ENCODE measurements at regions of chr19 and their contacts with region 1.

Region 1: GRCh38 chr19:49097455-49098288 is 12.4 kb downstream of the SNRNP70 start:
- DNase-seq: peak; percentile 87
- H3K4me3 Mint-ChIP-seq: no peak overlapping the region
- H3K27ac Mint-ChIP-seq: no peak overlapping the region
- H3K4me1 Mint-ChIP-seq: peaks cover 5% of the 10 kb centered on the region
- H3K27me3 Mint-ChIP-seq: no peaks in the 10 kb centered on the region
- CTCF ChIP-seq: peak; percentile 96

Region 2: DNA sequence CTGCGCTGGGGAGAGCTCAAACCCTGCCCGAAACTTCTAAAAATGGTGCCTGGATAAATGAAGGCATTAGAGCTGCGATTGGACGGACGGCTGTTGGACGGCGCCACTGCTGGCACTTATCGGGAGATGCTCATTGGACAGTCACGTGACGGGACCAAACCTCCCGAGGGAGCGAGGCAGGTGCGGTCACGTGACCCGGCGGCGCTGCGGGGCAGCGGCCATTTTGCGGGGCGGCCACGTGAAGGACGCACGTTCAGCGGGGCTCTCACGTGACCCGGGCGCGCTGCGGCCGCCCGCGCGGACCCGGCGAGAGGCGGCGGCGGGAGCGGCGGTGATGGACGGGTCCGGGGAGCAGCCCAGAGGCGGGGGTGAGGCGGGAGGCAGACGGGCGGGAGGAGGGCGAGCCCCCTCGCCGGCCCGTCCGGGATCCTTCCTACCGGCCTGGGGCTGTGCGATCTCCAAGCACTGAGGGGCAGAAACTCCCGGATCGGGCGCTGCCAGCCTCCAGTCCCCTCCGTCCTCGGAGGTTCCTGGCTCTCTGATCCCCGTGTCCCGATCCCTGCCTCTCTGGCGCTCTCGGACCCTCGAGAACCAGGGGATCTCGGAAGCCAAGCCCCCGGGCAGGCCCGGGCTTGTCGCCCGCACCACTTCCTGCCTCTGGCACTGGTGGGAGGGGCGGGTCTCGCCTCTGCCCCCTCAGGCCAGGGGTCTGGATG is 142.9 kb before region 1 on chr19 and contains the start of gene BAX:
- CTCF ChIA-PET with region 1: no interaction called
- POLR2A ChIA-PET with region 1: no interaction called
- intact Hi-C with region 1: no loop called
- DNase-seq: peak; percentile 98
- H3K4me3 Mint-ChIP-seq: peak within 1 kb of the TSS; percentile 81
- H3K27ac Mint-ChIP-seq: peak within 1 kb of the TSS; percentile 83
- H3K4me1 Mint-ChIP-seq: peaks cover 6% of the 10 kb centered on the region
- H3K27me3 Mint-ChIP-seq: no peaks in the 10 kb centered on the region
- CTCF ChIP-seq: no peak
- total RNA-seq, gene BAX: 130 and 152 TPM in 2 replicates

Region 3: GRCh38 chr19:49085020-49085867 is 12.4 kb before region 1 on chr19 and contains the start of gene SNRNP70:
- CTCF ChIA-PET with region 1: interaction called, 28 read pairs
- POLR2A ChIA-PET with region 1: interaction called, 8 read pairs
- intact Hi-C with region 1: no loop called
- DNase-seq: peak; percentile 99
- H3K4me3 Mint-ChIP-seq: peak within 1 kb of the TSS; percentile 97
- H3K27ac Mint-ChIP-seq: peak within 1 kb of the TSS; percentile 95
- H3K4me1 Mint-ChIP-seq: peaks cover 17% of the 10 kb centered on the region
- H3K27me3 Mint-ChIP-seq: no peaks in the 10 kb centered on the region
- CTCF ChIP-seq: no peak
- total RNA-seq, gene SNRNP70: 199 and 200 TPM in 2 replicates

Region 4: DNA sequence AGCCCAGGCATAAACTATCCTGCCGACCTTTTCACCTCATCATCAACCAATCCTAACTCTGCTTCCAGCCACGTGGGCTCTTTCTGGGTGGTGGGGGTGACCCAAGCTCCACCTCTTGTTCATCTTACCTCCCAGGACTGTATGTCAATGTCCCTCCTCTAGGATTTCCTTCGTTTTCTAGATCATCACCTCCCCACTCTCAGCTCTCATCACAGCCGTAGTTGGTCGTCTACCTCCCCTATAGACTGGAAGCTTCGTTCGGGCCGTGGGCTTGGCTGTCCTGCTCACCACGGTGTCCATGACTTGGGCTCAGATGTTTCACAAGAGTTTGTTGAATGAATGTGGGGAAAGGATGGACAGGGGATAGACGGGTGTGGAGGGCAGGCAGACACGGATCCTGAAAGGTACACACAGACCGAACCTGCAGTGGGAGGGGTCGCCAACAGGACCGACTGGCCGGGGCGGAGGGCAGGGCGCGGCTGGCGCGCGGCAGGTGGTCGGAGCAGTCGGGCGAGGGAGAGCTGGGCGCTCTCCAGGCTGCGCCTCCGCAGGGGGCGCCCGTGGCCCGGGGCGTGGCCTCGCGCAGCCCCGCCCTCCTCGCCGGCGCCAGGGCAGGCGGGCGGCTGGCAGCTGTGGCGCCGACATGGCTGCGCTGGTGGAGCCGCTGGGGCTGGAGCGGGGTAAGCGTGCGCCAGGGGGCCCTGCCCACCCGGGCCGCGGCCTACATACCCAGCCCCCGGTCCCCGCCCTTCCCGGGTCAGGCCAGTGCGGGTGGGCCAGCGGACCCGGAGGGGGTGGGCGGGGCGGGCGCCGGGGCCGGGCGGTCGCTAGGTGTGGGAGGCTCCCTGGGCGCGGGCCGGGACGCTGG is 16.3 kb after region 1 on chr19 and contains the start of gene LIN7B:
- CTCF ChIA-PET with region 1: interaction called, 22 read pairs
- POLR2A ChIA-PET with region 1: interaction called, 8 read pairs
- intact Hi-C with region 1: no loop called
- DNase-seq: peak; percentile 62
- H3K4me3 Mint-ChIP-seq: peak within 1 kb of the TSS; percentile 73
- H3K27ac Mint-ChIP-seq: no peak within 1 kb of the TSS
- H3K4me1 Mint-ChIP-seq: peaks cover 34% of the 10 kb centered on the region
- H3K27me3 Mint-ChIP-seq: no peaks in the 10 kb centered on the region
- CTCF ChIP-seq: peak; percentile 30
- total RNA-seq, gene LIN7B: 2.6 and 3.2 TPM in 2 replicates

Region 5: GRCh38 chr19:49119411-49120324 is 22.0 kb after region 1 on chr19 and contains the start of gene PPFIA3:
- CTCF ChIA-PET with region 1: interaction called, 22 read pairs
- POLR2A ChIA-PET with region 1: interaction called, 8 read pairs
- intact Hi-C with region 1: no loop called
- DNase-seq: peak; percentile 55
- H3K4me3 Mint-ChIP-seq: peak within 1 kb of the TSS; percentile 83
- H3K27ac Mint-ChIP-seq: peak within 1 kb of the TSS; percentile 83
- H3K4me1 Mint-ChIP-seq: peaks cover 31% of the 10 kb centered on the region
- H3K27me3 Mint-ChIP-seq: no peaks in the 10 kb centered on the region
- CTCF ChIP-seq: no peak
- total RNA-seq, gene PPFIA3: 6.7 and 8.0 TPM in 2 replicates

Region 6: DNA sequence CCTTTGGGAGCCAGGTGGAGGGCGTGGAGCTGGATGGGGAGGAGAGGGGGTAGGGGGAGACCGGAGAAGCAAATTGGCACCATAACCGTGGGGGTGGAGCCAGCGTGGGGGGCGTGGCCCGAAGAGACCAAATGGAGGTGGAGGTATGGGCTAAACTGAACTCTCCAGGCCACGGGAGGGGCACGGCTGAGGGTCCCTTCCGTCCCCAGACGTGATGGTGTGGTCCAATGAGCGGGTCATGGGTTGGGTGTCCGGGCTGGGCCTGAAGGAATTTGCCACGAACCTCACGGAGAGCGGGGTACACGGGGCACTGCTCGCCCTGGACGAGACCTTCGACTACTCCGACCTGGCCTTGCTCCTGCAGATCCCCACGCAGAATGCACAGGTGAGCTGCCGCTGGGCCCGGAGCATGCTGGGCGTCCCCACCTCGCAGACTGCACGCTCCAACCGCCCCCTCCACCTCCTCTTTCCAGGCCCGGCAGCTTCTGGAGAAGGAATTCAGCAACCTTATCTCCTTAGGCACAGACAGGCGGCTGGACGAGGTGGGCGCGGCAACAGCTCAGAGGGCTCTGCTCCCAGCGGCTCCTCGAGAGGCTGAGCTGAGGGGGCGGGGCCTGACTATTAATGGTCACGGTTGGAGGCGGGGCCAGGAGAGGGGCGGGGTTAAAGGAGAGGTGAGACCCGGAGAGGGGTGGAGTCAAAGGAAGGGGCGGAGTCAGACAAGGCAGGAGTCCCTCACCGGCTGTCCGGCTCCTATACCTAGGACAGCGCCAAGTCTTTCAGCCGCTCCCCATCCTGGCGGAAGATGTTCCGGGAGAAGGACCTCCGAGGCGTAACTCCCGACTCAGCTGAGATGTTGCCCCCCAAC is 51.3 kb after region 1 on chr19:
- CTCF ChIA-PET with region 1: interaction called, 29 read pairs
- POLR2A ChIA-PET with region 1: interaction called, 7 read pairs
- intact Hi-C with region 1: loop called (anchors 1 kb)
- DNase-seq: peak; percentile 98
- H3K4me3 Mint-ChIP-seq: peak overlapping the region; percentile 82
- H3K27ac Mint-ChIP-seq: peak overlapping the region; percentile 52
- H3K4me1 Mint-ChIP-seq: peaks cover 17% of the 10 kb centered on the region
- H3K27me3 Mint-ChIP-seq: no peaks in the 10 kb centered on the region
- CTCF ChIP-seq: no peak

Region 7: DNA sequence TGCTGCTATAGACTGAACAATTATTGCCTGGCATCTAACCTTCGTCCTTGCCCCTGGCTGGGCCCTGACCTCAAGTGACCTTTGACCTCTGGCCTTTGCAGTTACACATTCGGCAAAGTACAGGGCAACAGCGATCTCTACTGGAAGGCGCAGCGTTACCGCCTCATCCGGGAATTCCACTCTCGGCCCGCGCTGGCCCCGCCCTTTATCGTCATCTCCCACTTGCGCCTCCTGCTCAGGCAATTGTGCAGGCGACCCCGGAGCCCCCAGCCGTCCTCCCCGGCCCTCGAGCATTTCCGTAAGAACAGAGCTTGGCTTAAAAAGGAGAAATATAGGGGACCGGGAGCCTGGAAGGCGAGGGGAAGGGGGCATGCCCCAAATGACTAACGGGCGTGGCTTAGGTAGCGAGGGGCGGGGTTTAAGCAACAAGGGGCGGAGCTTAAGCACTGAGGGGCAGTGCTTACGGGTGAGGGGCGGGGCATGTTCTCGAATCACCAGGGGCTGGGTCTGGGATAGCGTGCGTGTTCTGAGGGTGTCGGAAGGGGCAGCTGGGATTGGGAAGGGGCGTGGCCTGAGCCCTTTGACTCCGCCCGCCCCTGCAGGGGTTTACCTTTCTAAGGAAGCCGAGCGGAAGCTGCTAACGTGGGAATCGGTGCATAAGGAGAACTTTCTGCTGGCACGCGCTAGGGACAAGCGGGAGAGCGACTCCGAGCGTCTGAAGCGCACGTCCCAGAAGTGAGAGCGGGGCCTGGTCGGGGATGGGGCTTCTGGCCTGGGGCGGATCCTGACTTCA is 112.6 kb after region 1 on chr19:
- CTCF ChIA-PET with region 1: interaction called, 13 read pairs
- POLR2A ChIA-PET with region 1: no interaction called
- intact Hi-C with region 1: no loop called
- DNase-seq: peak; percentile 17
- H3K4me3 Mint-ChIP-seq: no peak overlapping the region
- H3K27ac Mint-ChIP-seq: no peak overlapping the region
- H3K4me1 Mint-ChIP-seq: peaks cover 5% of the 10 kb centered on the region
- H3K27me3 Mint-ChIP-seq: no peaks in the 10 kb centered on the region
- CTCF ChIP-seq: no peak

Measured in MCF 10A (cell line).